Uterus (tissue), 4 donors: ENCODE measurements at regions of chr17 and their contacts with region 1.

Region 1: DNA sequence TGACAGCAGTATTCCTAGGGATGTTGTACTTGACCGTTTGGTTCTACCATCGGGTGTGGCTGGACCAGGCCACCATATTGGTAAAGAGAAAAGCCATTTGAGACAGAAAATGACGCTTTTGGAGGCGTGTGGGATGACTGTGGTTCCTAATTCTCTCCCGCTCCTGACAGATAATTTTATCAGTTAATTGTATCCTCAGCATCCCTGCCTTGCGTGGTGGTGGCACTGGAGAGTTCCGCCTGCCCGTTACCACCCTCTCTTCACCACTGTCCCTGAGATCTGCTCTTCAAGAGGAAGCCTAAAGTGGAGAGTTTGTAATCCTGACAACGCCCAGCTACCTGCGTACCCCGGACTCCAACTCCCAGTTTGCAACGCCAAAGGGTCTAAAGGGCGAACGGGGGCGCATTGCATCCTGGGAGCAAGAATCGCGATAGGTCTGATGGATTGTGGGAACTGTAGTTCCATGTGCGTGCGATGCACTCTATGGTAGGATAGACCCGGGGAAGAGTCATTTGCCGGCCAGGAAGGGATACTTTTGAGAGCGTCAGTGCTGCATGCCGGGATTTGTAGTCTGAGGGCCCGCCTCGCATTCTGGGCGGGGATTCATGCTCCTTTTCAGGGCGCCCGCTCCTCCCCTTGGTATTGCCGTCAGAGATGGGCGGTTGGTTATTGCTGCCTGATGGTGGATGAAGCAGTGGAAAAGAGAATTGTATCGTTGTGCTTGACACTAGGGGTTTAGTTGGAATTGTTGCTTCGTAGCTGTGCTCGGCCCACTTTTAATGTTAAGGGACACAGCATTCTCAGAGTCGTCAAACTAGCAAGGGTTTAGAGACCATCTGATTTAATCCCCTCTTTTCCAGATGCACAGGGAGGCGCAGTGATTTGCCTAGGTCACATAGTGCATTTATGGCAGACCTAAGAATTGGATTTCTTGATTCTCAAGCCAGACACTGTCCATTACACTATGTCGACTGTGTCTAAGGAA is 965 bp upstream of the PHF12 start:
- DNase-seq: peak; percentile 97 to 99
- H3K4me3 ChIP-seq: peak overlapping the region; percentile 48 to 55
- H3K27ac ChIP-seq: peak overlapping the region; percentile 96 to 100
- H3K4me1 ChIP-seq: no peaks in the 10 kb centered on the region
- H3K27me3 ChIP-seq: no peaks in the 10 kb centered on the region
- CTCF ChIP-seq: peak in 2 of 4 experiments; percentile 4
- POLR2A ChIP-seq: peak in 1 of 2 donors; percentile 42

Region 2: GRCh38 chr17:28902819-28903545 is 49.3 kb before region 1 on chr17 and contains the start of gene DHRS13:
- intact Hi-C with region 1: loop called (anchors 5 kb)
- DNase-seq: peak; percentile 79 to 80
- H3K4me3 ChIP-seq: peak within 1 kb of the TSS; percentile 42 to 74
- H3K27ac ChIP-seq: peak within 1 kb of the TSS; percentile 66 to 89
- H3K4me1 ChIP-seq: peaks cover 3 to 13% of the 10 kb centered on the region in 2 donors
- H3K27me3 ChIP-seq: no peaks in the 10 kb centered on the region
- CTCF ChIP-seq: peak; percentile 47 to 89 (median 86)
- POLR2A ChIP-seq: peak in 1 of 2 donors; percentile 39
- total RNA-seq, gene DHRS13: 0.26 to 17.4 (median 13.6) TPM